ENCODE measurements at regions of chr2 and their contacts with region 1.

Region 1: DNA sequence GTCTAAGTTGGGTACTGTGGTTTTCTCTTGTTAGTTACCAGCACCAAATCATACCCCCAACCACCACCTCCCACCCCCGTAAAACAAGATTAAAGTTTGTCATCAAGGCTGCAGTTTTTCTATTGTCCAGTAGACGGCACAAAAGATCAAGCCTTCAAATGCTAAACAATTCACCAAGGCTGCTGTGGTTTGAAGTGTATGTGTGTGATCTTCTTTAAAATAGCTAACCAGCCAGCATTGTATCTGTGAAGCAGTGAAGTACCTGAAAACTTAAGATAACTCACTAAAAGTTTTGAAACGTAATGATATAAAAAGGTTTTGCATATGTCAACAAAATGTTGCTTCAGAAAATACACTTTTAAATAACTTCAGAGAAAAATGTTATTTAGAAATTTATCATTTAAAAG is 5.9 kb upstream of the MEIS1 start:
- DNase-seq: peak; percentile 77
- ATAC-seq: no peak
- H3K4me3 ChIP-seq: no peak overlapping the region
- H3K27ac ChIP-seq: no peak overlapping the region
- H3K4me1 ChIP-seq: peaks cover 3% of the 10 kb centered on the region; the same call in 1 of the 2 replicates
- H3K27me3 ChIP-seq: peaks cover 23% of the 10 kb centered on the region
- CTCF ChIP-seq: peak; percentile 91

Region 2: GRCh38 chr2:65639156-65639864 is 789.8 kb before region 1 on chr2:
- CTCF ChIA-PET with region 1: no interaction called
- POLR2A ChIA-PET with region 1: no interaction called
- intact Hi-C with region 1: loop called (anchors 2 kb)
- DNase-seq: peak; percentile 20
- ATAC-seq: no peak
- H3K4me3 ChIP-seq: 0 out of 2 replicates have a peak overlapping the region, but pooled peaks have one; percentile 60
- H3K27ac ChIP-seq: no peak overlapping the region
- H3K4me1 ChIP-seq: no peaks in the 10 kb centered on the region
- H3K27me3 ChIP-seq: peaks cover 31% of the 10 kb centered on the region
- CTCF ChIP-seq: no peak

Region 3: GRCh38 chr2:66201209-66201608 is 227.9 kb before region 1 on chr2:
- CTCF ChIA-PET with region 1: interaction called, 10 read pairs
- POLR2A ChIA-PET with region 1: no interaction called
- intact Hi-C with region 1: no loop called
- DNase-seq: no peak
- ATAC-seq: no peak
- H3K4me3 ChIP-seq: no peak overlapping the region
- H3K27ac ChIP-seq: no peak overlapping the region
- H3K4me1 ChIP-seq: no peaks in the 10 kb centered on the region
- H3K27me3 ChIP-seq: peaks cover 53% of the 10 kb centered on the region
- CTCF ChIP-seq: no peak

Region 4: GRCh38 chr2:66495788-66496640 is 66.9 kb after region 1 on chr2:
- CTCF ChIA-PET with region 1: interaction called, 4 read pairs
- POLR2A ChIA-PET with region 1: no interaction called
- intact Hi-C with region 1: loop called (anchors 2 kb)
- DNase-seq: peak; percentile 84
- ATAC-seq: peak; percentile 87
- H3K4me3 ChIP-seq: peak overlapping the region; percentile 38
- H3K27ac ChIP-seq: peak overlapping the region; percentile 92
- H3K4me1 ChIP-seq: peaks cover 41% of the 10 kb centered on the region
- H3K27me3 ChIP-seq: no peaks in the 10 kb centered on the region
- CTCF ChIP-seq: peak; percentile 48; the same call in 1 of the 2 replicates

Region 5: GRCh38 chr2:67234439-67234838 is 805.4 kb after region 1 on chr2:
- CTCF ChIA-PET with region 1: no interaction called
- POLR2A ChIA-PET with region 1: no interaction called
- intact Hi-C with region 1: loop called (anchors 1 kb)
- DNase-seq: peak; percentile 51
- ATAC-seq: peak; percentile 56; the same call in 1 of the 2 replicates
- H3K4me3 ChIP-seq: no peak overlapping the region
- H3K27ac ChIP-seq: no peak overlapping the region
- H3K4me1 ChIP-seq: no peaks in the 10 kb centered on the region
- H3K27me3 ChIP-seq: no peaks in the 10 kb centered on the region
- CTCF ChIP-seq: peak; percentile 62

Region 6: GRCh38 chr2:67476809-67477790 is 1048.0 kb after region 1 on chr2:
- CTCF ChIA-PET with region 1: no interaction called
- POLR2A ChIA-PET with region 1: no interaction called
- intact Hi-C with region 1: loop called (anchors 2 kb)
- DNase-seq: peak; percentile 76
- ATAC-seq: peak; percentile 90
- H3K4me3 ChIP-seq: no peak overlapping the region
- H3K27ac ChIP-seq: peak overlapping the region; percentile 5
- H3K4me1 ChIP-seq: peaks cover 12% of the 10 kb centered on the region
- H3K27me3 ChIP-seq: no peaks in the 10 kb centered on the region
- CTCF ChIP-seq: peak; percentile 81

Region 7: GRCh38 chr2:67840460-67841068 is 1411.5 kb after region 1 on chr2:
- CTCF ChIA-PET with region 1: no interaction called
- POLR2A ChIA-PET with region 1: no interaction called
- intact Hi-C with region 1: loop called (anchors 2 kb)
- DNase-seq: peak; percentile 84
- ATAC-seq: peak; percentile 99
- H3K4me3 ChIP-seq: no peak overlapping the region
- H3K27ac ChIP-seq: no peak overlapping the region
- H3K4me1 ChIP-seq: peaks cover 9% of the 10 kb centered on the region
- H3K27me3 ChIP-seq: no peaks in the 10 kb centered on the region
- CTCF ChIP-seq: peak; percentile 97

Measured in PC-3 (cell line).